Psoas muscle (tissue), 8 donors: ENCODE measurements at regions of chr19 and their contacts with region 1.

Region 1: GRCh38 chr19:39546599-39546998 is 6.6 kb upstream of the EID2 start:
- DNase-seq: no peak
- ATAC-seq: no peak
- H3K4me3 ChIP-seq: no peak overlapping the region
- H3K27ac ChIP-seq: no peak overlapping the region
- H3K4me1 ChIP-seq: no peaks in the 10 kb centered on the region
- H3K27me3 ChIP-seq: no peaks in the 10 kb centered on the region
- CTCF ChIP-seq: no peak

Region 2: GRCh38 chr19:39494661-39495060 is 51.9 kb before region 1 on chr19:
- intact Hi-C with region 1: no loop called
- DNase-seq: no peak
- ATAC-seq: no peak
- H3K4me3 ChIP-seq: no peak overlapping the region
- H3K27ac ChIP-seq: no peak overlapping the region
- H3K4me1 ChIP-seq: peaks cover 18% of the 10 kb centered on the region
- H3K27me3 ChIP-seq: peaks cover 0 to 38% (median 12%) of the 10 kb centered on the region in 3 donors
- CTCF ChIP-seq: no peak

Region 3: DNA sequence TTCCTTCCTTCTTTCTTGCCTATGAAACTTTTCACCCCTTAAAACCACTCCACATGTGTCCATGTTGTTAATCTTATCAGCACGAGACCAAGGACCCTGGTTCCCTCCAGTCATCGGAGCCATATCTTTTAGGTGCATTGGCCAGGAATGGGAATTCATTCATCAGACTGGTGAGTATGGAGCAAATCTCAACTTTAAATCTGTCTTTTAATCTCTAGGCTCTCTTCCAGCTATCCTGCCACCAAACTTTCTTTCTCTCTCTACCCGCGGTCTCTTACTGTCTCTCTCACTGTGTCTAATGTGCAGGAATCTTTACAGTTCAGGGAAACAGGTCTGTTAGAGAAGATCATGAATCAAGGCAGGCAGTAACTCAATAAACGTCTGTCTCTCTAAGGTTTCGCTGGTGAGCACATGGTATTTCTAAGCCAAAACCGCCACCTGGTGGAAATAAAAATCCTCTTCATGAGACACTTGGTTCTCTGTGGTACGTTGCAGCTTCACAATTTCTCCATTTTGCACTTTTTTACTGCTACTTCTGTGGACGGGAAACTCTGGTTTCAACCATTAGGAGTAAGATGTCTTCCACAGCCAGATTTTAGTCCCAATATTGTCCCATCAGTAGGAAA is 125.3 kb after region 1 on chr19:
- intact Hi-C with region 1: loop called (anchors 1 to 5 kb)
- DNase-seq: no peak
- ATAC-seq: peak; percentile 58 to 84 (median 68)
- H3K4me3 ChIP-seq: no peak overlapping the region
- H3K27ac ChIP-seq: no peak overlapping the region
- H3K4me1 ChIP-seq: peaks cover 4% of the 10 kb centered on the region
- H3K27me3 ChIP-seq: no peaks in the 10 kb centered on the region
- CTCF ChIP-seq: peak; percentile 71